ENCODE measurements at regions of chr2 and their contacts with region 1.

Region 1: GRCh38 chr2:241355983-241356870 is at the start of gene FARP2:
- DNase-seq: peak; percentile 99 to 100 (median 100)
- ATAC-seq: peak; percentile 91 to 96 (median 94)
- H3K4me3 ChIP-seq: peak within 1 kb of the TSS; percentile 60 to 97 (median 88)
- H3K27ac ChIP-seq: peak within 1 kb of the TSS; percentile 16 to 93 (median 86)
- H3K4me1 ChIP-seq: peaks cover 0 to 40% (median 19%) of the 10 kb centered on the region in 12 donors
- H3K27me3 ChIP-seq: no peaks in the 10 kb centered on the region
- CTCF ChIP-seq: peak in 1 of 12 donors; percentile 7
- POLR2A ChIP-seq: peak in 1 of 2 donors; percentile 91
- total RNA-seq, gene FARP2: 17.1 to 31.8 (median 21.9) TPM

Region 2: GRCh38 chr2:241271641-241272297 is 84.5 kb before region 1 on chr2:
- intact Hi-C with region 1: loop called in 1 of 10 experiments (anchors 5 kb)
- DNase-seq: peak; percentile 85 to 91 (median 87)
- ATAC-seq: peak; percentile 85 to 91 (median 90)
- H3K4me3 ChIP-seq: peak overlapping the region; percentile 61 to 98 (median 92)
- H3K27ac ChIP-seq: peak overlapping the region; percentile 57 to 97 (median 93)
- H3K4me1 ChIP-seq: peaks cover 0 to 49% (median 37%) of the 10 kb centered on the region in 12 donors
- H3K27me3 ChIP-seq: no peaks in the 10 kb centered on the region
- CTCF ChIP-seq: no peak
- POLR2A ChIP-seq: no peak

Region 3: GRCh38 chr2:241315093-241315878 is 40.9 kb before region 1 on chr2 and contains the start of gene HDLBP:
- intact Hi-C with region 1: loop called in 6 of 10 experiments (anchors 1 to 5 kb)
- DNase-seq: peak; percentile 100
- ATAC-seq: peak; percentile 92 to 95 (median 94)
- H3K4me3 ChIP-seq: peak within 1 kb of the TSS; percentile 64 to 93 (median 82)
- H3K27ac ChIP-seq: peak within 1 kb of the TSS; percentile 92 to 100 (median 99)
- H3K4me1 ChIP-seq: peaks cover 4 to 80% (median 53%) of the 10 kb centered on the region in 12 donors
- H3K27me3 ChIP-seq: no peaks in the 10 kb centered on the region
- CTCF ChIP-seq: peak in 9 of 12 donors; percentile 4 to 75 (median 49)
- POLR2A ChIP-seq: peak in 1 of 2 donors; percentile 79
- total RNA-seq, gene HDLBP: 312 to 407 (median 352) TPM

Region 4: DNA sequence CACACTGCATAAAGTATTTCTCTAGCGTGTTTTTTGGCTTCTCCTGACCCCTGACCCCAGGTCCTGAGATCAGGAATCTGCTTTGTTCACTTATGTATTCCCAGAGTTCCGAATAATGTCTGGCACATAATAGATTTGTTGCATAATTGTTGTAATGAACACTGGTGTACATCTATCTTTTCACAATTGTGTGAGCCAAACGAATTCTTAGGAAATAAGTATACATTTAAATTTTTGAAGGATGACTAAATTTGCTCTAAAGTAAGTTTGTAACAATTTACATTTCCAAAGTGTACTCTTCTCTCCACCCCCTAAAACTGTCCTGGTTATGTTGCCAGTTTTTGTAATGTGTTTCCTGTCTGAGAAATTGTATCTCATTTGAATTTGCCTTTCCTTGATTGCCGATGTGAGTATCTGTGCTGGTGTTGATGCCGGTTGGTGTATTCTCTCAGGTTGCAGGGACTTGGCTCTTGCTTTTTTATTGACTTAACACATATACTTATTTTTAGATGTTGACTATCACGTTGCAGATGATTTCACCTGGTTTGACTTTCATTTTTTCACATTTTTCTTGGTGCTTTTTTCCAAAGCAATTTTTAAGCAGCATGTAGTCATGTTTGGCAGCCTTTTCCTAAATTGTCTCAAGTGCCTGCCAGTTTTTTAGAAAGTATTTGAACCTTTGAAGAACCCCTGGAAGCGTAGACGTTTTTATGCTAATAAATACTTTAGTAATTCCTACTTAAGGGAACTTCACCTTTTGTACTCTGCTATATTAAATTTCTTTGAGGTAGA is 16.2 kb before region 1 on chr2:
- intact Hi-C with region 1: loop called in 1 of 10 experiments (anchors 2 kb)
- DNase-seq: no peak
- ATAC-seq: no peak
- H3K4me3 ChIP-seq: no peak overlapping the region
- H3K27ac ChIP-seq: peak overlapping the region in 1 of 12 donors; percentile 6
- H3K4me1 ChIP-seq: peaks cover 0 to 22% (median 0%) of the 10 kb centered on the region in 12 donors
- H3K27me3 ChIP-seq: no peaks in the 10 kb centered on the region
- CTCF ChIP-seq: no peak
- POLR2A ChIP-seq: no peak

Region 5: DNA sequence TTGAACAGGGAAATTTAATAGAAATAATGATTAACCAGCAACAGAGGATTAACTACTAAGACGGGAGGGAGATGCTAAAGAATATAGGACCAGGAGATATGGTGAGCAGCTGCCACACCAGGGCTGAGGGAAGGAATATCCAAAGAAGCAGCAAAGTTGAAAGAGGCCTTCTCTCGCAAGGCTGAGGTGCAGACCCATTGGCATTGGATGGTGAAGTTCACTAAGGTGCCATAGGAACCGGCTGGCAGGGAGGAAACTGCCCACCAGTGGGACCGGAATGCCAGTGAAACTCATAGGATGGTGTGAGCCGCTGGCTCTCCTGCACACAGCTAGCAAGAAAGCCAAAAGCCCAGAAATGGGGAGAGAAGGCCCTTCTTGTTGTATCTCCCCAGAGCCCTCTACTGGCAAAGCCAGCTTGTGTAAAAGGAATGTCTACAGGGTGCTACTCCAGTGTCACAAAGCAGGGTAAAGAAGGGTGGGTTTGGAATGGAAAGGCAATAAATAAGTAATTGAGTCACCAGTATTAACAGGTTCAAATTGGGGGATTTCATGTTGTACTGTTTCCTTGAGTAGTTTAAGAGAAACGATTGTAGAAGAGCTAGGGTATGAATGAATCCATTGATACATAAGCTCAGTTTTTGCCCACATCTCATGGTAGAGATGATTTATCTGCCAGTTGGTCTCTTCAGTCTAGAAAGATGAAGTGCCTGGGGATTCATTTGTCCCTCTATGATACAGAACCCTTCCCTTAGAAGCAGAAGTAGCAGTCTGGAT is 35.9 kb after region 1 on chr2:
- intact Hi-C with region 1: loop called in 1 of 10 experiments (anchors 5 kb)
- DNase-seq: no peak
- ATAC-seq: no peak
- H3K4me3 ChIP-seq: no peak overlapping the region
- H3K27ac ChIP-seq: no peak overlapping the region
- H3K4me1 ChIP-seq: peaks cover 0 to 16% (median 0%) of the 10 kb centered on the region in 12 donors
- H3K27me3 ChIP-seq: no peaks in the 10 kb centered on the region
- CTCF ChIP-seq: peak in 8 of 12 donors; percentile 14 to 36 (median 28)
- POLR2A ChIP-seq: no peak

Region 6: DNA sequence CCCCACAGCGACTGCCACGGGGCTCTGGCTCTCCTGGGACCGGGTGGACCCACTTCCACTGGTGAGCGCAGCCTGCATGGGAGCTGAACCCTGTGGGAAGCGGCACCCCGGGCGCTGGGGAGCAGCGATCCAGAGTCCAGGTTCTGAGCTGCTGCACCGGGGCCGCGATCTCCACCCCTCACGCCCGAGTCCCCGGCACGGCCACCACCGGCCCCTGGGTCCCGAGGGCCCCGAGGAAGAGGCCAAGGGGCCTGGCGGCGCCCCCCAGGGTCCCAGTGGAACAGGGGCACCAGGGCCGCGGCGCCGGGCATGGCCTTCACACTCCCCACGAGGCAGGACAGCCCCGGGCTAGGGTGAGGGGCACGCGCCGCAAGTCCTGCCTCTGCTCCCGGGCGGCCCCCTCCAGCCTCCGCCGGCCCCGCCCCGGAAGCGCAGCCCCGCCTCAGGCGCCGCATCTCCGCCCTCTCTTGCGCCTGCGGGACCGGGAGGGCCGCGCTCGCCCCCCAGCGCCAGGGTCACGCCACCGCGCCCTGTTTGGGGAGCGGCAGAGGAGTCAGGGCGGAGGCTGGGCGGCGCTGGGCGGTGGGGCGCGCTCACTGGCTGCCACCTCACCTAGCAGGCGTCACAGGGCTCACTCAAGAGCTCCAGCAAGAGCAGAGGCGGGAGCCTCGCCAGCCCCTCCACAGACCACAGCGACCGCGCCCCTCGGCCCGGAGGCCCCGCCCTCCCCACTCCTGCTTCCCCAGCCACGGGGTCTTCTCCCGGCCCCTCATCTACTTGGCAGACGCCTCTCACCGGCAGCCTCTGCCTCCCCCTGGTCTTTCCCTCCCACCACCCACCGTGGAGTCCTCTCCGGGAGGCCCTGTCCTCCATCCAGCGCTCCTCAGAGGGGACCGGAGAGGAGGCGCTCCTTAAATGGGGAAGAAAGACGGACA is 253.9 kb after region 1 on chr2:
- intact Hi-C with region 1: loop called in 2 of 10 experiments (anchors 10 kb)
- DNase-seq: peak; percentile 79 to 92 (median 89)
- ATAC-seq: peak; percentile 81 to 96 (median 96)
- H3K4me3 ChIP-seq: peak overlapping the region; percentile 54 to 69 (median 61)
- H3K27ac ChIP-seq: peak overlapping the region; percentile 3 to 90 (median 72)
- H3K4me1 ChIP-seq: peaks cover 0 to 34% (median 16%) of the 10 kb centered on the region in 12 donors
- H3K27me3 ChIP-seq: no peaks in the 10 kb centered on the region
- CTCF ChIP-seq: peak; percentile 55 to 82 (median 70)
- POLR2A ChIP-seq: peak in 1 of 2 donors; percentile 47

Measured in heart left ventricle (tissue), 16 donors.